ENCODE measurements at regions of chr20 and their contacts with region 1.

Region 1: DNA sequence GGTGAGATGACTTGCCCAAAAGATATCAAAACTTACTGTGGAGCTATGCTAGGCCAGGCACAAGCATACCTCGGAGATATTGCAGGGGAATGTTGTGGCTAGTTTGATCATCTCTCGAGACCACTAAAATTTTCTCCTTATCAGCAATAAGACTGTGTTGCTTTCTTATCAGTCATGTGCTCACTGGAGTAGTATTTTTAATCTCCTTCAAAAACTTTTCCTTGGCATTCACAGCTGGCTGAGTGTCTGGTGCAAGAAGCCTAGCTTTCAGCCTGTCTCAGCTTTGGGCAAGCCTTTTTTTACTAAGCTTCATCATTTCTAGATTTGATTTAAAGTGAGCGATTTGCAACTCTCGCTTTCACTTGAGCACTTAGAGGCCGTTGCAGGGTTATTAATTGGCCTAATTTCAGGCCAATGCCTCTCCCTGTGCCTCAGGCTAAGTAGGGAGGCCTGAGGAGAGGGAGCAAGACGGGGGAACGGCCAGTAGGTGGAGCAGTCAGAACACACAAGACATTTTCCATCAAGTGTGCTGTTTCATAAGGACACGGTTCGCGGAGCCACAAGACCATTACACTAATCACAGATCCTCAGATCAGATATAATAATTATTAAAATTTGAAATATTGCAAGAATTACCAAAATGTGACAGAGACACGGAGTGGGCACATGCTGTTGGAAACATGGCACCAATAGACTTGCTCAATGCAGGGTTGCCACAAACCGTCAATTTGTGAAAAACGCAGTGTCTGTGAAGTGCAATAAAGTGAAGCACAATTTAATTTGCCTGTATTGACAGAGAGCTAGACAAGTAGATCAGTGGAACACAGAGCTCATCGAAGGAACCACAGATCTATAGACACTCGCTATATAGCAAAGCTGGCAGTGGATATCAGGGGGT is 106.8 kb upstream of the SIRPG start:
- DNase-seq: peak; percentile 83
- ATAC-seq: peak; percentile 74
- H3K4me3 Mint-ChIP-seq: no peak overlapping the region
- H3K27ac Mint-ChIP-seq: no peak overlapping the region
- H3K4me1 Mint-ChIP-seq: no peaks in the 10 kb centered on the region
- H3K27me3 Mint-ChIP-seq: peaks cover 2% of the 10 kb centered on the region

Region 2: GRCh38 chr20:1509237-1509636 is 255.1 kb before region 1 on chr20:
- CTCF ChIA-PET with region 1: interaction called, 16 read pairs
- POLR2A ChIA-PET with region 1: no interaction called
- intact Hi-C with region 1: no loop called
- DNase-seq: peak; percentile 52
- ATAC-seq: peak; percentile 93
- H3K4me3 Mint-ChIP-seq: no peak overlapping the region
- H3K27ac Mint-ChIP-seq: no peak overlapping the region
- H3K4me1 Mint-ChIP-seq: no peaks in the 10 kb centered on the region
- H3K27me3 Mint-ChIP-seq: peaks cover 8% of the 10 kb centered on the region

Region 3: DNA sequence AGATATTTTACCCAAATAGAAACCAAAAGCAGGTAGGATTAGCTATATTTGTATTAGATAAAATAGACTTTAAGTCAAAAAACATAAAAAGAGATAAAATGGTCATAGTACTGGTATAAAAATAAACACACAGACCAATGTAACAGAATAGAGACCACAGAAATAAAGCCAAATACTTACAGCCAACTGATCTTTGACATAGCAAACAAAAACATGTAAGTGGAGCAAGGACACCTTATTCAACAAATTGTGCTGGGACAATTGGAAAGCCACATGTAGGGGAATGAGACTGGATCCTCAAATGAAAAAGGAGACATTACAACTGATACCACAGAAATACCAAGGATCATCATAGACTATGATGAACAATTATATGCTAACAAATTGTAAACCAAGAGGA is 12.3 kb before region 1 on chr20:
- CTCF ChIA-PET with region 1: interaction called, 14 read pairs
- POLR2A ChIA-PET with region 1: no interaction called
- intact Hi-C with region 1: no loop called
- DNase-seq: no peak
- ATAC-seq: no peak
- H3K4me3 Mint-ChIP-seq: no peak overlapping the region
- H3K27ac Mint-ChIP-seq: no peak overlapping the region
- H3K4me1 Mint-ChIP-seq: no peaks in the 10 kb centered on the region
- H3K27me3 Mint-ChIP-seq: no peaks in the 10 kb centered on the region

Region 4: GRCh38 chr20:1827974-1828785 is 63.8 kb after region 1 on chr20:
- CTCF ChIA-PET with region 1: no interaction called
- POLR2A ChIA-PET with region 1: no interaction called
- intact Hi-C with region 1: no loop called
- DNase-seq: no peak
- ATAC-seq: no peak
- H3K4me3 Mint-ChIP-seq: no peak overlapping the region
- H3K27ac Mint-ChIP-seq: no peak overlapping the region
- H3K4me1 Mint-ChIP-seq: peaks cover 2% of the 10 kb centered on the region
- H3K27me3 Mint-ChIP-seq: no peaks in the 10 kb centered on the region

Measured in activated CD4-positive, alpha-beta T cell treated with anti-CD3 and anti-CD28 coated beads for 36 hours (primary cell).